ENCODE measurements at regions of chr6 and their contacts with region 1.

Region 1: DNA sequence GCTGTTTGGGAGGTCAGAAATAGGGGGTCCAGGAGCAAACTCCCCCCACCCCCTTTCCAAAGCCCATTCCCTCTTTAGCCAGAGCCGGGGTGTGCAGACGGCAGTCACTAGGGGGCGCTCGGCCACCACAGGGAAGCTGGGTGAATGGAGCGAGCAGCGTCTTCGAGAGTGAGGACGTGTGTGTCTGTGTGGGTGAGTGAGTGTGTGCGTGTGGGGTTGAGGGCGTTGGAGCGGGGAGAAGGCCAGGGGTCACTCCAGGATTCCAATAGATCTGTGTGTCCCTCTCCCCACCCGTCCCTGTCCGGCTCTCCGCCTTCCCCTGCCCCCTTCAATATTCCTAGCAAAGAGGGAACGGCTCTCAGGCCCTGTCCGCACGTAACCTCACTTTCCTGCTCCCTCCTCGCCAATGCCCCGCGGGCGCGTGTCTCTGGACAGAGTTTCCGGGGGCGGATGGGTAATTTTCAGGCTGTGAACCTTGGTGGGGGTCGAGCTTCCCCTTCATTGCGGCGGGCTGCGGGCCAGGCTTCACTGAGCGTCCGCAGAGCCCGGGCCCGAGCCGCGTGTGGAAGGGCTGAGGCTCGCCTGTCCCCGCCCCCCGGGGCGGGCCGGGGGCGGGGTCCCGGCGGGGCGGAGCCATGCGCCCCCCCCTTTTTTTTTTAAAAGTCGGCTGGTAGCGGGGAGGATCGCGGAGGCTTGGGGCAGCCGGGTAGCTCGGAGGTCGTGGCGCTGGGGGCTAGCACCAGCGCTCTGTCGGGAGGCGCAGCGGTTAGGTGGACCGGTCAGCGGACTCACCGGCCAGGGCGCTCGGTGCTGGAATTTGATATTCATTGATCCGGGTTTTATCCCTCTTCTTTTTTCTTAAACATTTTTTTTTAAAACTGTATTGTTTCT is at the start of gene VEGFA:
- DNase-seq: peak; percentile 94
- H3K4me3 ChIP-seq: peak within 1 kb of the TSS; percentile 55 to 88 (median 66)
- H3K27ac ChIP-seq: peak within 1 kb of the TSS; percentile 95 to 99 (median 98)
- H3K4me1 ChIP-seq: peaks cover 0 to 42% (median 40%) of the 10 kb centered on the region in 4 donors
- H3K27me3 ChIP-seq: no peaks in the 10 kb centered on the region
- CTCF ChIP-seq: peak; percentile 97 to 100 (median 99)
- EP300 ChIP-seq: no peak
- POLR2A ChIP-seq: peak; percentile 58 to 72
- total RNA-seq, gene VEGFA: 20.9 to 60.9 (median 28.5) TPM

Region 2: GRCh38 chr6:43174263-43175112 is 595.3 kb before region 1 on chr6:
- intact Hi-C with region 1: loop called (anchors 5 kb)
- DNase-seq: peak; percentile 99
- H3K4me3 ChIP-seq: peak overlapping the region; percentile 88 to 98 (median 95)
- H3K27ac ChIP-seq: peak overlapping the region; percentile 99 to 100 (median 100)
- H3K4me1 ChIP-seq: peaks cover 0 to 52% (median 49%) of the 10 kb centered on the region in 4 donors
- H3K27me3 ChIP-seq: no peaks in the 10 kb centered on the region
- CTCF ChIP-seq: no peak
- EP300 ChIP-seq: peak in 2 of 4 donors; percentile 24 to 33
- POLR2A ChIP-seq: peak in 1 of 2 donors; percentile 63

Region 3: DNA sequence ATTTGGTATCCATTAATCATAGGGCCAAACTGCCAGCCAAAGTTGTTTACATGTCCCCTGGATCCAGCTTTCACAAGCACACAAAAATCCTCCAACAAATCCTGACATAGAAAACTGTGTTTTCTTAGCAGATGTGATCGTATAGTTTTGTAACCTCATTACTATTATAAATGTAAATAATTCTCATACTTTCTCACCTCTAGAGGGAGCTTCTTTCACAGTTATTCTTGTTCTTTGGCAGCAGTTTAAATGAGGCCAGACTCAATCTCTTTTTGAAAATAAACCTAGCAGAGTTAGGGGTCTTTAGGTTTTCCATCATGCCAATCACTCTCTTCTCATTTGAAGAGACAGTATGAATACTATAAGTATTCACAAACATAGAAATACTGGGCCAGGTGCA is 383.3 kb before region 1 on chr6:
- intact Hi-C with region 1: no loop called
- DNase-seq: no peak
- H3K4me3 ChIP-seq: no peak overlapping the region
- H3K27ac ChIP-seq: no peak overlapping the region
- H3K4me1 ChIP-seq: no peaks in the 10 kb centered on the region
- H3K27me3 ChIP-seq: peaks cover 0 to 4% (median 0%) of the 10 kb centered on the region in 3 donors
- CTCF ChIP-seq: peak in 1 of 4 experiments; percentile 37
- EP300 ChIP-seq: no peak
- POLR2A ChIP-seq: no peak

Region 4: DNA sequence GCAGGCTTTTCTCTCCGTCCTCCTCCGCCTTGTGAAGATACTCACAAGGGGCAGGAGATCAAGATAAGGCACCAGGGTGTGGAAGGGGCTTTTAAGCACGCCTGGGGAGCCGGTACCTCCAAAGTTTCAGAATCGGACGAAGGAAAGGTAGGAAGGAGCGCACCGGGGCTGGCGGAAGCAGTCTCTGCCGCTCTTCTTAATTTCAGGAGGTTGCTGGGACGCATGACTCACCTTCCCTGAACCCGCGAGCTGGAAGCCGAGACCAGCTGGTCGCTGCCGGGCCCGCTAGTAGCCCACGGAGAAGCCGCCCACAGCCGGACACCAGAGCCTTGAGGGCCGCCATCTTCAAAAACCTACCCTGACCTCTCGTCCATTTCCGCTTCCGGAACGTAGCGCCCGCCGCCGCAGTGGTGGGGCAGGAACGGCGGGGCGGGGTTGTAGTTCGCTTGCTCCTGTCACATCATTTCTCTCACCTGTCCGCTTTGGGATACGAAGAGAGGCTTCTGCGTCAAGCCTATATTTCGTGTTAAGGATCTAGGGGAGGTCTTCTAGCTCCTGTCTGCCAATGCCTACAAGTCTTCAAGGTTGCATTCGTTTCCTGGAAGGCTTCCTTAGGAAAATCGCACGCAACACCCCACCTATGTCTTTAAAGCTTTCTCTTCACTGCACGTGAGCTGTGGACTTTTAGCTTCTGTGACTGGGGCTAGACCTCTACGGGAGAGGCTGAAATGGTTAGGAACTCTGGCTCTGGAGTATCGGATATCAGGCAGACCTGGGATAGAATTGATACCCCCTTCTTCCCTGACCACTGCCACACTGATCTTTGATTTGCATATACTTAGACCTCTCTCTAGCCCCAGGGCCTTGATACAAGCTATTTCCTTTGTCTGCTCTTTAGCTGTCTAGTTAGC is 82.1 kb before region 1 on chr6 and contains the start of gene MRPS18A:
- intact Hi-C with region 1: loop called (anchors 5 kb)
- DNase-seq: peak; percentile 90
- H3K4me3 ChIP-seq: peak within 1 kb of the TSS; percentile 85 to 93 (median 86)
- H3K27ac ChIP-seq: peak within 1 kb of the TSS; percentile 72 to 78 (median 76)
- H3K4me1 ChIP-seq: peaks cover 0 to 35% (median 20%) of the 10 kb centered on the region in 4 donors
- H3K27me3 ChIP-seq: no peaks in the 10 kb centered on the region
- CTCF ChIP-seq: no peak
- EP300 ChIP-seq: no peak
- POLR2A ChIP-seq: peak; percentile 19 to 76
- total RNA-seq, gene MRPS18A: 28.8 to 43.9 (median 34.1) TPM

Region 5: GRCh38 chr6:44002593-44003344 is 233.0 kb after region 1 on chr6:
- intact Hi-C with region 1: loop called (anchors 5 kb)
- DNase-seq: no peak
- H3K4me3 ChIP-seq: peak overlapping the region; percentile 17 to 46 (median 40)
- H3K27ac ChIP-seq: peak overlapping the region in 1 of 4 donors; percentile 19
- H3K4me1 ChIP-seq: peaks cover 0 to 23% (median 14%) of the 10 kb centered on the region in 4 donors
- H3K27me3 ChIP-seq: peaks cover 4 to 27% (median 20%) of the 10 kb centered on the region in 3 donors
- CTCF ChIP-seq: no peak
- EP300 ChIP-seq: no peak
- POLR2A ChIP-seq: no peak

Region 6: GRCh38 chr6:44221291-44221960 is 451.7 kb after region 1 on chr6:
- intact Hi-C with region 1: loop called (anchors 5 kb)
- DNase-seq: peak; percentile 98
- H3K4me3 ChIP-seq: peak overlapping the region; percentile 63 to 78 (median 68)
- H3K27ac ChIP-seq: peak overlapping the region; percentile 94 to 98 (median 97)
- H3K4me1 ChIP-seq: peaks cover 0 to 94% (median 89%) of the 10 kb centered on the region in 4 donors
- H3K27me3 ChIP-seq: no peaks in the 10 kb centered on the region
- CTCF ChIP-seq: peak; percentile 84 to 93 (median 90)
- EP300 ChIP-seq: peak in 2 of 4 donors; percentile 28 to 67
- POLR2A ChIP-seq: no peak